Panc1 (cell line): ENCODE measurements at regions of chr17 and their contacts with region 1.

Region 1: DNA sequence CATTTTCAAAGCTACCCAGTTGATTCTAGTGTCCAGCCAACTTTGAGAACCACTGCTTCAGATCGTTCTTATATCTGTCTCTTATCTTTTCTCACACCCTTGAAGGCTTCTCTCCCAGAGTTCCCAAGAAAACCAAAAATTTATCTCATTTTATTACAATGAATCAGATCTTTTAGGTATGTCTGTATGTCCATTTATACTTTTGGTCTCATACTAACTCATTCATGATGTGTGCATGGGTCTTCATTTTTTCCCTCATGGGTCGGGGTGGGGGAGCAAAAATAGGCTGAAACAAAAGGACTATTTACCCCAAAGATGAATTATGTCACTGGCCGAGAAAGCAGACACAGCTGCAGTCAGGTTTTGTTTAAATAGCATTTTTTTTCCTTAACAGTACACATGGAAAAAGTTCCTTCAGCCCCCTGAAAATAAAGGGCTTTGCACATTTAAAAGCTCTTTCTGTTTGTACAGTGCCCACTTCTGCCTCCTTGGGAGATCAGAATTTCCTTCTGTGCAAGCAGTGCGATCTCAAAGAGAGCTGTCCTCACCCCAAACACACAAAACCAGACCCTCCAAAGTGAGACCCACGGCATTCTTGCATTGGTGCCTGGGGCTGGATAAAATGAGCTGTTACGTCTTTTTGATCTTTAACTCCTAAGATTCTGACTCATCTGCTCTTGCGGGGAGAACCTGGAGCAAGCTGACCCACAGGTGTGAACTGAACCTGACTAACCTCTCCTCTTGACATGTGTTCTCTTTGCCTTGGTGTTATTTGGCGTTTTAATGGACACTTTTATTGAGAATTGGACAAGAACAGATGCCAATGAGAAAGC is 251.2 kb upstream of the ELAC2 start:
- DNase-seq: no peak
- ATAC-seq: no peak
- H3K4me3 ChIP-seq: no peak overlapping the region
- H3K27ac ChIP-seq: no peak overlapping the region
- H3K4me1 ChIP-seq: no peaks in the 10 kb centered on the region
- H3K27me3 ChIP-seq: no peaks in the 10 kb centered on the region
- CTCF ChIP-seq: no peak

Region 2: DNA sequence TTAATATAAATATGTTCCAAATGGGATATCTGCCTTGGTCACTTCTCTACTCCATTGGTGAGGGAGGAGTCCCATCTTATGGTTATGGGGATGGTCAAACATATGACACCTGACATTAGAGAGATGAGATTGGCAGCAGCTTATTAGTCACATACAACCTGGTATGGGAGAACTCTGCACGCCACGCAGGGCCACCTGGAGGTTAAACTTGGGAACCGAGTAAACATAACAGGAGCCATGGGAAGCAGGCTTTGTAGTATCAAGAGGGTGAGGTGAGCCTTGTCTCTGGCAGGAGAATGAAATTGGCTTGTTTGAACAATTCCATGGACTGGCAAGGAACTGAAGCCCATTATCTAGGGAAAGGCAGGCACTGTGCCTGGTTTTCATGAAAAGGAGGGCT is 12.5 kb before region 1 on chr17:
- CTCF ChIA-PET with region 1: no interaction called
- POLR2A ChIA-PET with region 1: no interaction called
- in situ Hi-C with region 1: no loop called
- intact Hi-C with region 1: no loop called
- DNase-seq: no peak
- ATAC-seq: no peak
- H3K4me3 ChIP-seq: no peak overlapping the region
- H3K27ac ChIP-seq: no peak overlapping the region
- H3K4me1 ChIP-seq: no peaks in the 10 kb centered on the region
- H3K27me3 ChIP-seq: no peaks in the 10 kb centered on the region
- CTCF ChIP-seq: no peak

Region 3: DNA sequence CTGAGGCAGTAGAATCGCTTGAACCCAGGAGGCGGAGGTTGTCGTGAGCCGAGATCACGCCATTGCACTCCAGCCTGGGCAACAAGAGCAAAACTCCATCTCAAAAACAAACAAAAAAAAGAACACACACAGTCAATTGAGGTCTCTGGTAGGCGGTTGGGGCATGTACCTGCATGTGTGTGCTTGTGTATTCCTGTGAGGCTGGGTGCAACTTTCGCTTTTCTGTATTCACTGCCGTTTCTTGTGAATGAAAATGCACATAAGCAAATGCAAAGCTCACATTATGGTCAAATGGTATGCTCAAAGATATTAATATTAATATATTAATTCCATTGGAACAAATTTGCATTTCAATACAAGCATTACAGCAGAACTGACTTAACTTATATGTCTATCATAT is 311.8 kb after region 1 on chr17:
- CTCF ChIA-PET with region 1: no interaction called
- POLR2A ChIA-PET with region 1: interaction called, 13 read pairs
- in situ Hi-C with region 1: no loop called
- intact Hi-C with region 1: no loop called
- DNase-seq: no peak
- ATAC-seq: no peak
- H3K4me3 ChIP-seq: no peak overlapping the region
- H3K27ac ChIP-seq: no peak overlapping the region
- H3K4me1 ChIP-seq: no peaks in the 10 kb centered on the region
- H3K27me3 ChIP-seq: no peaks in the 10 kb centered on the region
- CTCF ChIP-seq: no peak